ENCODE measurements at regions of chr11 and their contacts with region 1.

Region 1: GRCh38 chr11:1694064-1694845 is 2.7 kb upstream of the KRTAP5-6 start:
- DNase-seq: peak; percentile 65 to 76
- H3K4me3 ChIP-seq: peak overlapping the region; percentile 37 to 65 (median 38)
- H3K27ac ChIP-seq: peak overlapping the region; percentile 4 to 36
- H3K4me1 ChIP-seq: peaks cover 10 to 12% of the 10 kb centered on the region in 2 donors
- H3K27me3 ChIP-seq: peaks cover 0 to 20% of the 10 kb centered on the region in 2 donors
- CTCF ChIP-seq: peak; percentile 68 to 95 (median 85)
- POLR2A ChIP-seq: no peak

Region 2: DNA sequence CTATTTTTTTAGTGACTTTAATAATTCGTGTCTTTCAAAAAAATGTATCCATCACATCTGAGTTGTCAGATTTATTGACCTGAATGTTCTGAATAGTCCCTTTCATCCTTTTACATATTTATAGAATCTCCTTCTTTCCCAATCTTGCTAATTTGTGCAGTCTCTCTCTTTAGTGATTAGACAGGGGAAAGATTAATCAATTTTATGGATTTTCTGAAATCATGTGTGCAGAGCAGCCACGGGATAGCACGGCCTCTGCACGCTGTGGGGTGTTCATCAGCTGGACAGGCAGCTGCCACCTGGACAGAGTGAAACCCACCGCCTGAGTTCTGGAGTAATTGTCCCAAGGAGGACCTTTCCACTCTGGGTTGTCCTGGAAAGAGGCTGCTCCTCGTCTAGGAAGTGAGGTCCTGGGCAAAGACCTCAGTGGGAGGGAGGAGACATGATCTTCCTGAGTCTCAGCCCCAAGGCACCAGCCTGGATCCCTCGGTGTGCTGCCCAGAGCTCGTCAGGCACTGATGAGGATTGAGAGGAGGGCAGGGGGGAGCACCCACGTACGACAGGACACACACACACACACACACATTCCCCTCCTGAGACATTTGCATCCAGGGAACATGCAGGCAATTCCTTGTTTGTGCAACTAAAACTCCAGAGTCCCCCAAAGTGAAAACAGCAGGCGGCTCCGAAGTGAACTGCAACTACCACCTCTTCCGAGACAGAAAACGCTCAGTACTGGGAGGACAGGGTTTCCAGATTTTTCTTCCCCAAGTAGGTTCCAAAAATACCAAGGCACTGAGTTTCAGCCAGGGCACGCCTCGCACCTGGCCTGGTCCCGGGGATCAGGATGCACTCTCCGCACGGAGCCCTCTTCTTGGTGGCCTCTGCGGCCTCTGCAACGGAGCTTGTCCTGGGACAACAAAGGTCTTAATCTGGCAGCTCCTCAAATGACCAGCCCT is 19.8 kb before region 1 on chr11:
- intact Hi-C with region 1: no loop called
- DNase-seq: no peak
- H3K4me3 ChIP-seq: no peak overlapping the region
- H3K27ac ChIP-seq: no peak overlapping the region
- H3K4me1 ChIP-seq: no peaks in the 10 kb centered on the region
- H3K27me3 ChIP-seq: peaks cover 0 to 36% of the 10 kb centered on the region in 2 donors
- CTCF ChIP-seq: no peak
- POLR2A ChIP-seq: no peak

Region 3: DNA sequence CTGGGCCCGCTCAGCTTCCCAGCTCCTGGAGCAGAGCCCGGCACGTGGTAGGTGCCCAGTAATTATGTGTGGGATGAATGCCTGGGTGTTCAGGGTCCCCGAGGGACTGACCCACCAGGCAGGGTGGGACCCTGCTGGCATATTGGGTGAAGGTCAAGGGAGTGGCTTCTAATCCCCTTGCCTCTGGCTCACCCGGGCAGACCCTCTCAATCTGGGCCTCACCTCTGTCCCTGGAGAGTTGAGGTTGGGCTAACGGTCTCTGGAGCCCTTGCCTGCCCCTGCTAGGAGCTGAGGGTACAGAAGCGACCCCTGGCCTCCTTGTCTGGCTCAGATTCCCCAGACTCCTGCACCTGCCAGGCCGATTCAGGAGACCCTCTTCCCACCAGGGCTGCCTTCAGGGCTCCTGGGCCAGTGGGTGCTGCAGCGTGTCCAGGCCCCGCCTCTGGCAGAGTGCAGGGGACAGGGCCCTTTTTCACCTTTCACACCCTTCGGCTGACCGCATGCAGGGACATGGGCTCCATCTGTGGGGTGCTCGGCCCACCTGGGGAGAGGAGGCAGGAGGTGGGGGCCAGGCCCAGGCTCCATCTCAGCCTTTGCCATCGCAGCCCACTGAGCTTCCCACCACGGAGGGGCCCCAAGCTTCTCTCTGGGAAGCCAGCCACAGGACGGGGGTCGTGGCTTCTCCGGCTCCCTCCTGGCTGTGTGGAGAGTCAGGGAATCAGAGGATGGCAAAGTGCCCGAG is 73.3 kb after region 1 on chr11:
- intact Hi-C with region 1: loop called (anchors 2 kb)
- DNase-seq: no peak
- H3K4me3 ChIP-seq: no peak overlapping the region
- H3K27ac ChIP-seq: no peak overlapping the region
- H3K4me1 ChIP-seq: no peaks in the 10 kb centered on the region
- H3K27me3 ChIP-seq: no peaks in the 10 kb centered on the region
- CTCF ChIP-seq: no peak
- POLR2A ChIP-seq: no peak

Region 4: GRCh38 chr11:1832211-1832919 is 138.1 kb after region 1 on chr11:
- intact Hi-C with region 1: loop called (anchors 2 kb)
- DNase-seq: no peak
- H3K4me3 ChIP-seq: peak overlapping the region in 2 of 3 donors; percentile 9 to 23
- H3K27ac ChIP-seq: peak overlapping the region; percentile 83 to 85
- H3K4me1 ChIP-seq: peaks cover 15 to 34% of the 10 kb centered on the region in 2 donors
- H3K27me3 ChIP-seq: no peaks in the 10 kb centered on the region
- CTCF ChIP-seq: peak; percentile 91 to 97 (median 95)
- POLR2A ChIP-seq: no peak

Region 5: GRCh38 chr11:2151500-2152257 is 457.4 kb after region 1 on chr11:
- intact Hi-C with region 1: loop called (anchors 5 kb)
- DNase-seq: peak; percentile 77 to 83
- H3K4me3 ChIP-seq: no peak overlapping the region
- H3K27ac ChIP-seq: no peak overlapping the region
- H3K4me1 ChIP-seq: peaks cover 0 to 3% of the 10 kb centered on the region in 2 donors
- H3K27me3 ChIP-seq: peaks cover 0 to 59% of the 10 kb centered on the region in 2 donors
- CTCF ChIP-seq: peak; percentile 89 to 98 (median 94)
- POLR2A ChIP-seq: no peak